HEK293T (cell line): ENCODE measurements at regions of chr12 and their contacts with region 1.

Region 1: GRCh38 chr12:53481957-53482586 is 17.2 kb downstream of the MAP3K12 start:
- DNase-seq: peak; percentile 39

Region 2: GRCh38 chr12:53492830-53493611 is 10.9 kb after region 1 on chr12:
- CTCF ChIA-PET with region 1: interaction called, 8 read pairs
- POLR2A ChIA-PET with region 1: interaction called, 19 read pairs
- DNase-seq: peak; percentile 90